Calu3 (cell line): ENCODE measurements at regions of chr1 and their contacts with region 1.

Region 1: GRCh38 chr1:110766025-110766647 is 91.4 kb upstream of the KCNA3 start:
- DNase-seq: peak; percentile 16
- H3K4me3 Mint-ChIP-seq: no peak overlapping the region
- H3K27ac Mint-ChIP-seq: no peak overlapping the region
- H3K4me1 Mint-ChIP-seq: no peaks in the 10 kb centered on the region
- H3K27me3 Mint-ChIP-seq: peaks cover 82% of the 10 kb centered on the region
- CTCF ChIP-seq: peak; percentile 36

Region 2: GRCh38 chr1:110524311-110525251 is 241.6 kb before region 1 on chr1:
- CTCF ChIA-PET with region 1: no interaction called
- intact Hi-C with region 1: loop called (anchors 5 kb)
- DNase-seq: peak; percentile 37
- H3K4me3 Mint-ChIP-seq: no peak overlapping the region
- H3K27ac Mint-ChIP-seq: no peak overlapping the region
- H3K4me1 Mint-ChIP-seq: peaks cover 6% of the 10 kb centered on the region
- H3K27me3 Mint-ChIP-seq: peaks cover 83% of the 10 kb centered on the region
- CTCF ChIP-seq: peak; percentile 51

Region 3: GRCh38 chr1:110630839-110631663 is 135.1 kb before region 1 on chr1:
- CTCF ChIA-PET with region 1: interaction called, 13 read pairs
- intact Hi-C with region 1: loop called (anchors 1 kb)
- DNase-seq: peak; percentile 82
- H3K4me3 Mint-ChIP-seq: no peak overlapping the region
- H3K27ac Mint-ChIP-seq: no peak overlapping the region
- H3K4me1 Mint-ChIP-seq: peaks cover 8% of the 10 kb centered on the region
- H3K27me3 Mint-ChIP-seq: peaks cover 16% of the 10 kb centered on the region
- CTCF ChIP-seq: peak; percentile 49